RWPE1 (cell line): ENCODE measurements at regions of chr1 and their contacts with region 1.

Region 1: GRCh38 chr1:183915625-183916510 is 110.9 kb downstream of the RGL1 start:
- DNase-seq: peak; percentile 94
- H3K27ac ChIP-seq: no peak overlapping the region
- CTCF ChIP-seq: peak; percentile 81

Region 2: DNA sequence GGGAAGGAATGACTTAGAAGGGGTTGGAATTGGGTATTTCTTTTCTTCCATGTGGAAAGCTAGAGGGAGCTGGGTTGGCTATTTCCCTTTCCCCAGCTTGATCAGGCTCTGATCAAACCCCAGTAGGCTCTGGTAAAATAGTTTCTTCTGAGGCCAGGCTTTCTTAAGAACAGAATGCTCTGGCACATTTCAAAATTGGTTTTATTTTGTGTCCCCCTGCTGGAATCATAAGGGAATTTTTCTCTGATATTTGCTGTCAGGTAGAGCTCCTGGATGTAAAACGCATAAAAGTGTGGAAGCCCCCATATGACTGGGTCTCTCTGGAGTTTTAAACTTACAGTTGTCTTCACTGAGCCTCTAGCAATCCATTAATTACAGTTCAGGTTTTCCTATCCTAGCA is 245.7 kb before region 1 on chr1:
- CTCF ChIA-PET with region 1: no interaction called
- POLR2A ChIA-PET with region 1: no interaction called
- DNase-seq: no peak
- H3K27ac ChIP-seq: no peak overlapping the region
- CTCF ChIP-seq: no peak

Region 3: GRCh38 chr1:183685112-183685713 is 230.7 kb before region 1 on chr1:
- CTCF ChIA-PET with region 1: interaction called, 11 read pairs
- POLR2A ChIA-PET with region 1: no interaction called
- DNase-seq: peak; percentile 79
- H3K27ac ChIP-seq: no peak overlapping the region
- CTCF ChIP-seq: peak; percentile 80

Region 4: GRCh38 chr1:184270556-184270955 is 354.7 kb after region 1 on chr1:
- CTCF ChIA-PET with region 1: no interaction called
- POLR2A ChIA-PET with region 1: no interaction called
- DNase-seq: no peak
- H3K27ac ChIP-seq: no peak overlapping the region
- CTCF ChIP-seq: no peak